ENCODE measurements at regions of chr1 and their contacts with region 1.

Region 1: DNA sequence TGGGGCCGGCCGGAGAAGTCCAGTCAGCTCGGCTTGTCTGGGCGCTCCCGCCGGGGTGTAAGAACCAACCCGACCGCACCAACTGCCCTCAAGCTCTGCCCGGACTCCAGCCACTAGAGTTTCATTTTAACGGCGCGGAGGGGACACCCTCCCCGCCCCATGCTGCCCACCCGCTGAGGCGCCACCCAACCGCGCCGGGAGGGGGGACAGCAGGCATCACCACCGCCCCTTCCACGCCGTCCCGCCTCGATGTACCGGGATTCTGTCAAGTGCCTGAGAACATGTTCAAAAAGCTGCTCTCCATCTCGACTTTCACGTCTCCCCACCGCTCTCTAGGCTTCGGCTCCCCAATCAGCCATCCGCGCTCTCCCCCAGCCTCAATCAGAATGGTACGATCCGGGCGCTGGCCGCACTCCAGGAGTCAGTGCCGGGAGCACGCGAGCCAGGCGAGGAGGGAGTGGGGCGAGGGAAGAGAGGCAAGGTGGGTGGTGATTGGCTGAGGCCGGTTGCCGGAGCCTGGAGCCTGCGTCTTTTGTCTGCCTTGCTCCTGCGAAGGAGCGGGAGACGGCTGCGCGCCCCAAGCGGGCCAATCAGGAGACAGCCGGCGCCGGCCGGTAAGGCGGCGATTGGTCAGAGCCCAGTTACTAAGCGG is at the start of gene PIK3R3:
- DNase-seq: peak; percentile 98
- ATAC-seq: peak; percentile 82 to 84
- H3K4me3 ChIP-seq: peak within 1 kb of the TSS; percentile 76 to 95 (median 84)
- H3K27ac ChIP-seq: peak within 1 kb of the TSS; percentile 96 to 99 (median 98)
- H3K4me1 ChIP-seq: peaks cover 39 to 44% of the 10 kb centered on the region in 2 donors
- H3K27me3 ChIP-seq: peaks cover 0 to 10% (median 6%) of the 10 kb centered on the region in 3 donors
- CTCF ChIP-seq: peak in 2 of 5 experiments; percentile 18 to 24
- POLR2A ChIP-seq: peak; percentile 95 to 98
- total RNA-seq, gene PIK3R3: 12.1 to 23.8 (median 15.9) TPM

Region 2: DNA sequence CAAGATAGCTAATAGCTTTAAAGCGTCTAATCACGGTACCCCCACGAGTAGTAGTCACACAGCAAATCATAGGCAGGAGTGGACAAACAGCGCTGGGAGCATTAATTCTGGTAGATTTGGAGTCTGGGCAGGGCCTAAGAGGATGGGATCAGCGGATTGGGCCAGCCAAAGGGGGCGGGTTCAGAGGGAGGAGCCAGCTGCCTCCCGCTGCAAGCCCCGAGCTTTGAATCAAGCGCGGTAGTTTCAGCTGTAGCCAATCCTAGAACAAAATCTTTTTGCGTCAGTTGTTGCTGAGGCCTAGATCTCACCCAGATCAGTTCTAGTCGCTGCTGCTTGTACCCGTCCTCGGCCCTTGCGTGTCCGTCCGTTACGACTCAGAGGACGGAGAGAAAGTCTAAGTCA is 549.4 kb before region 1 on chr1:
- in situ Hi-C with region 1: no loop called
- intact Hi-C with region 1: loop called (anchors 10 kb)
- DNase-seq: peak; percentile 95 to 96
- ATAC-seq: peak; percentile 92 to 96
- H3K4me3 ChIP-seq: peak overlapping the region; percentile 82 to 97 (median 94)
- H3K27ac ChIP-seq: peak overlapping the region; percentile 92 to 99 (median 96)
- H3K4me1 ChIP-seq: peaks cover 22 to 23% of the 10 kb centered on the region in 2 donors
- H3K27me3 ChIP-seq: no peaks in the 10 kb centered on the region
- CTCF ChIP-seq: no peak
- POLR2A ChIP-seq: no peak

Region 3: GRCh38 chr1:45803301-45803780 is 329.3 kb before region 1 on chr1 and contains the start of gene MAST2:
- in situ Hi-C with region 1: no loop called
- intact Hi-C with region 1: loop called (anchors 5 kb)
- DNase-seq: peak; percentile 77 to 87
- ATAC-seq: peak; percentile 65 to 80
- H3K4me3 ChIP-seq: peak within 1 kb of the TSS; percentile 64 to 79 (median 72)
- H3K27ac ChIP-seq: peak within 1 kb of the TSS; percentile 88 to 96 (median 92)
- H3K4me1 ChIP-seq: peaks cover 22 to 40% of the 10 kb centered on the region in 2 donors
- H3K27me3 ChIP-seq: no peaks in the 10 kb centered on the region
- CTCF ChIP-seq: peak in 2 of 5 experiments; percentile 21 to 30
- POLR2A ChIP-seq: peak; percentile 97 to 98
- total RNA-seq, gene MAST2: 110 to 195 (median 162) TPM

Region 4: DNA sequence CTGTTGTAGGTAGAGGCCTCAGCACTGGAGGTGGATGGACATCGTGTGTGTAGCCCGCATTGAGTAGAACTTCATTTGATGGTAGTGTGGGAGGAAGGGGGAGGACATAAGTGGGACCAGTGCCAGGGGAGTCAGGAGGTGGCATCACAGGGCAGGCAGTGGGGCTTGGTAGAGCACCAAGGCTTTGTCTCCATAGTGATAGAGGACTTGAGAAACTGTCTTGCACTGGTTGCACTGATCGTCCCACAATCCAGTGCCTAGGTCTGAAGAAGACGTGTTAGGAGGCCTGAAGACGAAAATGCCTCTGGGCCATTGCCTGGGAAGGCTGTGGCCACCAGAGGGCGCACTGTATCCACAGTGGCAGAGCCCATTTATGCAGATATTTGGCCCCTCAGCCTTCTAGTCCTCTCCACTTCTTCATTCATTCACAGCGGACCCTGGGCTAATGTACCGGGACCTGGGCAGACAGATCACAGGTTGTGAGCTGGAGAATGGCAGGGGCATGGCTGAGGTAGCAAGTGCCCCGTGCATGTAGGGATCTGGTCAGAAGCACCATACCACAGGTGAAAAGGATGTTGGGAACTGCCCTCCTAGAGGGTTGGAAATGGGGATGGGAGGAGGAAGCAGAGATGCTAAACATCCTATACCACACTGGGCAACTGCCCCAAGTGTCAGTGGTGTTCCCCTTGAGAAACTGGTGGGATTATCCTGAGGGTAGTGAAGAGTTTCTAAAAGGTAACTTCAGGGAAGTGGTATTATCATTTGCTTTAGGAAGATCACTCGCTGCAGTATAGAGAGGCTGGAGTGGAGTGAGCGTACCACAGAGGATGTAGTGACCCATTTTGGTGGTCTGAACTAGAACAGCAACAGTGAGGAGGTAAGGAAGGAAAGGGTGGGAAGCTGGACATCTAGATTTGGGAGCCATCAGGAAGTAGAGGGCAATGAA is 95.5 kb before region 1 on chr1:
- in situ Hi-C with region 1: no loop called
- intact Hi-C with region 1: loop called (anchors 5 kb)
- DNase-seq: peak; percentile 62 to 85
- ATAC-seq: peak; percentile 60 to 63
- H3K4me3 ChIP-seq: no peak overlapping the region
- H3K27ac ChIP-seq: peak overlapping the region; percentile 62 to 79 (median 74)
- H3K4me1 ChIP-seq: peaks cover 40 to 53% of the 10 kb centered on the region in 2 donors
- H3K27me3 ChIP-seq: no peaks in the 10 kb centered on the region
- CTCF ChIP-seq: peak; percentile 95 to 97 (median 97)
- POLR2A ChIP-seq: no peak